Natural killer cell (primary cell): ENCODE measurements at regions of chr11 and their contacts with region 1.

Region 1: DNA sequence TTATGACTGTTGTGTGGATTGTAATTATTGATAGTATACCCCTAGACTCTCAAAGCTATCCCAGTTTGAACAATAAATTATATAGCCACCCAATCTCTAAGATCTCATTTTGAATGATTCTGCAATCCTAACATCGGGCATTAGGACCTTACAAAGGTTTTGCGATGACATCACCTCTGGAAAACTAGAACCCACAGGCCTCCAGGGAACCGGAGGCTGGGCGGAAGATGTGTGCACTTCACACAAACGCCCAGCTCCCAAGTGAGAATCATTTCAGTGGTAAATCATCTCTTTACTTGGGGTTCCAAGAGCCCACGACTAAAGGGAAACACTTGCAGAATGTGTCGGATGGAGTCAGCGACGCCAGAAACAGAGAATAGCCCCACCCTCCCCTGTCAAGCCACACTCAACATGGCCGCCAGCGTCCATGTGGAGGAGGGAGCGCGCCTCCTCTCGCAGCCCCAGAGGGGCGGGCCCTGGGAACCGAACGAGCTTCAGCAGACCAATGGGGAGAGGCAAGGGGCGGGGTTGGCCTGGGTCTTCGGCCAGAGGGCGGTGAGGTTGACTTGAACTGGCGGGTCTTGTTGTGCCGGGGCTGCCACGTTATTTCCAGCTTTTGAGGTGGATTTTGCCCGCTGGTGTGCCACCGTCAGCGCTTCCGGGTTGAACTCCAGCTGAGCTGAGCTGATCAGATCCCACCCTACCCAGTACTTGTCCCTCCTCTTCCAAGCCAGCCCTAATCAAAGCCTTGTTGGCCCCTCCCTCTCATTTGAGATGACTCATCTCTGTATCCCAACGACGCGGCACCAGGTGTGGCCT is 8.4 kb upstream of the MRPL48 start:
- DNase-seq: peak; percentile 95 to 98
- ATAC-seq: peak; percentile 98 to 100 (median 99)
- H3K4me3 ChIP-seq: peak overlapping the region; percentile 39
- H3K4me3 Mint-ChIP-seq: peak overlapping the region; percentile 92
- H3K27ac ChIP-seq: peak overlapping the region; percentile 79
- H3K27ac Mint-ChIP-seq: peak overlapping the region; percentile 91 to 96
- H3K4me1 ChIP-seq: peaks cover 11% of the 10 kb centered on the region
- H3K4me1 Mint-ChIP-seq: peaks cover 5 to 10% of the 10 kb centered on the region in 2 donors
- H3K27me3 ChIP-seq: no peaks in the 10 kb centered on the region
- H3K27me3 Mint-ChIP-seq: peaks cover 8 to 10% of the 10 kb centered on the region in 2 donors
- CTCF ChIP-seq: no peak

Region 2: DNA sequence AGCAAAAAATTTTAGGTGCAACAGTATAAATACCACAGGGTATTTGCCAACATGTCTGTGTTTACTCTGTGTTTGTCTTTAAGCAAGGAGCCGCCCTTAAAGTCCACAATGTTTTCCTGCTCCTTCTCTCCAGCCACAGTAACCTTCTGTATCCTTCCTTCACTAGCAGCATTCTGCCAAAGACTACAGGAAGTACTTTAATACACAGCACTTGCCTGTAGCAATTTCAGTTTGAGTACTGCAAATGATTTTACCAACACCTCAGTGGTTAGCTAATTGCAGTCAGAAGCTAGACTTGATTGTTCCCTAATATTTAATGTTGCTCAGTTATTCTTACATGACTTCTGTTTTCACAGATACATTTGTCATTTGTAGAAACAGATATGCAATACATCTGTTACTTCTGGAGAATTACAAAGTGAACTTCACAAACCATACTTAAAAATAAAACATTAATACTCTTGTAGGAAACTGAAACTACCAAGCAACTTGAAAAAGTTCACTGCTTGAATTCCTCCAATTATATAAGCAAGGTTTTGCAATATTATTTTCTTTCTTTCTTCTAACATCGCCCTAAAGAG is 706.3 kb before region 1 on chr11:
- intact Hi-C with region 1: no loop called
- DNase-seq: peak in 1 of 2 donors; percentile 34
- ATAC-seq: peak; percentile 55 to 80 (median 77)
- H3K4me3 ChIP-seq: no peak overlapping the region
- H3K4me3 Mint-ChIP-seq: peak overlapping the region; percentile 78
- H3K27ac ChIP-seq: peak overlapping the region; percentile 1
- H3K27ac Mint-ChIP-seq: peak overlapping the region; percentile 58 to 68
- H3K4me1 ChIP-seq: no peaks in the 10 kb centered on the region
- H3K4me1 Mint-ChIP-seq: peaks cover 31 to 34% of the 10 kb centered on the region in 2 donors
- H3K27me3 ChIP-seq: no peaks in the 10 kb centered on the region
- H3K27me3 Mint-ChIP-seq: no peaks in the 10 kb centered on the region
- CTCF ChIP-seq: no peak

Region 3: DNA sequence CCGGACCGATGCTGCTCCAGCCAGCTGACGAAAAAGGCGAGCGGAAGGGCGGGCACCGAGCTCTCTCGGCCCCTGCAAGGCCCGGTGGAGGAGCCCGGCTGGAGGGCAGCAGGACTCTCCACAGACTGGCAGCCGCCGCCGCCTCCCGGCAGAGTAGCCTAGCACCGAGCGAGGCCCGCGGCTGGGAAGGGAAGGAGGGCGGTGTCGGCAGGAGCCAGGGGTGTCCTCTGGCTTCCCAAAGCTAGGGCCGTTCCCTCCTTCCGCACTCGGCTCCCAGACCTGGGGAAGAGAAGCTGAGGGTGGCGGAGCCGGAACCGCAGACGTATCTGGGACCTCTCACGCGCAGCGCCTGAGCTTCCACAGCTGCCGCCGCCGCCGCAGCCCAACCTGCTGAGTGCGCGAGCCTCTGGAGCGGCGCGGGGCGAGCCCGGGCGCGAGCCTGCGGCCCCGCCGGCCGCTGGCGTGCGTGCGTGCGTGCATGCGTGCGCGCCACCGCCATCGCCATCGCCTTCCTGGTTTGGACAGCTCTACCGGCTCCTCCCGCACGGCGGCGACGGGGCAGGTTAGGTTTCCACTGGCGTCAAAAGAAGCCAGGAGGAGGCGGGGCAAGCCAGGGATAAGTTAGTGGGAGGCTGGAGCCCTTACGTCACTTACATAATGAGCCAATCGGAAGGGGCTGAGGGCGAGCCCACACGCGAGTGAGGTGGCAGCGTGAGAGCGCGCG is 18.5 kb before region 1 on chr11 and contains the start of gene RAB6A:
- intact Hi-C with region 1: loop called (anchors 1 kb)
- DNase-seq: peak; percentile 96 to 100
- ATAC-seq: peak; percentile 89 to 95 (median 90)
- H3K4me3 ChIP-seq: peak within 1 kb of the TSS; percentile 99
- H3K4me3 Mint-ChIP-seq: peak within 1 kb of the TSS; percentile 84
- H3K27ac ChIP-seq: peak within 1 kb of the TSS; percentile 85
- H3K27ac Mint-ChIP-seq: peak within 1 kb of the TSS; percentile 82 to 95
- H3K4me1 ChIP-seq: peaks cover 11% of the 10 kb centered on the region
- H3K4me1 Mint-ChIP-seq: peaks cover 19 to 30% of the 10 kb centered on the region in 2 donors
- H3K27me3 ChIP-seq: no peaks in the 10 kb centered on the region
- H3K27me3 Mint-ChIP-seq: no peaks in the 10 kb centered on the region
- CTCF ChIP-seq: peak; percentile 16
- total RNA-seq, gene RAB6A: 72.2 to 107 (median 97.7) TPM

Region 4: GRCh38 chr11:74170694-74171629 is 391.7 kb after region 1 on chr11 and contains the starts of genes C2CD3 and PPME1:
- intact Hi-C with region 1: loop called (anchors 2 kb)
- DNase-seq: peak; percentile 93 to 99
- ATAC-seq: peak; percentile 91 to 96 (median 92)
- H3K4me3 ChIP-seq: peak within 1 kb of the TSS; percentile 80
- H3K4me3 Mint-ChIP-seq: no peak within 1 kb of the TSS
- H3K27ac ChIP-seq: peak within 1 kb of the TSS; percentile 77
- H3K27ac Mint-ChIP-seq: no peak within 1 kb of the TSS
- H3K4me1 ChIP-seq: peaks cover 20% of the 10 kb centered on the region
- H3K4me1 Mint-ChIP-seq: peaks cover 4 to 6% of the 10 kb centered on the region in 2 donors
- H3K27me3 ChIP-seq: no peaks in the 10 kb centered on the region
- H3K27me3 Mint-ChIP-seq: no peaks in the 10 kb centered on the region
- CTCF ChIP-seq: peak; percentile 14
- total RNA-seq, gene C2CD3: 55.0 to 67.6 (median 58.1) TPM
- total RNA-seq, gene PPME1: 15.6 to 18.5 (median 16.9) TPM